CD8-positive, alpha-beta memory T cell (primary cell): ENCODE measurements at regions of chr17 and their contacts with region 1.

Region 1: DNA sequence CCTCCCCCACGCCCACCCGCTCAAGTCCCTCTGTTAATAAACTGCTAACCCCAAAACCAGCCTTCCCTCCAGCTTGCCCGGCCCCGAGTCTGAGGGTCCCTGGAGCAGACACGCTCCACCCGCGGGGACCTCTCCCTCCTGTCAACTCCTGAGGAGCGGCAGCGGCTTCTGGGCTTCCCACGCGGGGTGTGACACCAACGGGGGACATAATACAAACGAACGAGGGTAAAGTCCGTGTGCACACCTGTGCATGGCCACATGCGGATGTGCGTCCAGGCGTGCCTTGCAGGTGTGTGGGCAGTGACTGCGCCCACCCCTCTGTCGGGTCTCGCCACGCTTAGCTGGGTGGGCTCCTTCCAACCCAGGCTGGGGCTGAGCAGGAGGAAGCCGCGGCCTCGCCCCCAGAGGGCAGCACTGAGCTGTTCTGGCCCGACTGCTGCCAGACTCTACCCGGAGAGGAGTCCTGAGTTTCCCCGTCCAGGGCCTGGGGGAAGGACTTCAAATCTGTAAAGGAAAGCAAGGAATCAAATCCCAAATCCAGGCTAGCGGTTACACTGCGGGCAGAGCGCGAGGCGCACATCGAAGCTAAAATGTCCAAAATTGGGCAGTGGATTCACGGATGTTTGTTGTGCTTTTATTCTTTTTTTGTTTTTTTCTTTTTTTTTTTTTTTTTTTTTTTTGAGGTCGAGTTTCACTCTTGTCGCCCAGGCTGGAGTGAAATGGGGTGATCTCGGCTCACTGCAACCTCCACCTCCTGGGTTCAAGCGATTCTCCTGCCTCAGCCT is 24.2 kb upstream of the KRT17 start:
- DNase-seq: peak; percentile 77 to 86 (median 81)
- H3K4me3 ChIP-seq: peak overlapping the region; percentile 75
- H3K4me3 Mint-ChIP-seq: peak overlapping the region; percentile 44 to 83 (median 78)
- H3K27ac ChIP-seq: no peak overlapping the region
- H3K27ac Mint-ChIP-seq: peak overlapping the region in 6 of 8 donors; percentile 20 to 89 (median 70)
- H3K4me1 ChIP-seq: peaks cover 14% of the 10 kb centered on the region
- H3K4me1 Mint-ChIP-seq: peaks cover 9 to 15% (median 11%) of the 10 kb centered on the region in 3 donors
- H3K27me3 ChIP-seq: no peaks in the 10 kb centered on the region
- H3K27me3 Mint-ChIP-seq: peaks cover 0 to 1% of the 10 kb centered on the region in 2 donors

Region 2: DNA sequence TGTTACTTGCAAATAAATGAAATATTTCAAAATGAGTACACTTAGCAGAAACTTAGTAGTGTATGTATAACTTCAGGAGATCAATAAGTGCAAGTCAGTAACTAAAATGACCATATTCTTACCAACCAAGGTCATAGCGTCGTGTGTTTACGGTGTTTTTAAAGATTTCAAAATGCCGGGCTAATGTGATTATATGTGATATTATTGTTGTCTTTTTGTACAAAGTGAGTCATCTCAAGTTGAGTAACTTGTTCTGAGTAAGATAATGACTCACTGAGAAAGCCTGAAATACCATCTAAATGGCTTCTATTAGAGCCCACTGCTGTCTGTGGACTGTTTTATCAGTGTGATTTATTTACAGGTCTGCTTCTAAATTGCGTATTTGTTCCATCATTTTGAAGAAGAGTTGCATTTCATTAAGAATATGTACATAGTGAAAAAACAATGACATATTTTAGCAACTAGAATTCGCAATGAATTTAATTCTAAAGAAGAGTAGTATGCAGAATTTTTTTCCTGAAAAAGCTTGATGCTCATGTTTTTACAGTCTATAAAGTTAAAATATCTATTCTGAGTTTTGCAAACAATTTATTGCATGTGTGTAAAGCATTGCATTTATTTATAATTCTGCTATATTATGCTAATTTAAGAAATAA is 794.3 kb before region 1 on chr17:
- CTCF ChIA-PET with region 1: interaction called, 28 read pairs
- POLR2A ChIA-PET with region 1: no interaction called
- DNase-seq: no peak
- H3K4me3 ChIP-seq: no peak overlapping the region
- H3K4me3 Mint-ChIP-seq: no peak overlapping the region
- H3K27ac ChIP-seq: no peak overlapping the region
- H3K27ac Mint-ChIP-seq: no peak overlapping the region
- H3K4me1 ChIP-seq: no peaks in the 10 kb centered on the region
- H3K4me1 Mint-ChIP-seq: peaks cover 3 to 4% (median 4%) of the 10 kb centered on the region in 3 donors
- H3K27me3 ChIP-seq: no peaks in the 10 kb centered on the region
- H3K27me3 Mint-ChIP-seq: peaks cover 14 to 45% of the 10 kb centered on the region in 2 donors

Region 3: GRCh38 chr17:41588126-41588810 is 60.3 kb before region 1 on chr17:
- CTCF ChIA-PET with region 1: no interaction called
- POLR2A ChIA-PET with region 1: no interaction called
- DNase-seq: no peak
- H3K4me3 ChIP-seq: no peak overlapping the region
- H3K4me3 Mint-ChIP-seq: no peak overlapping the region
- H3K27ac ChIP-seq: no peak overlapping the region
- H3K27ac Mint-ChIP-seq: no peak overlapping the region
- H3K4me1 ChIP-seq: no peaks in the 10 kb centered on the region
- H3K4me1 Mint-ChIP-seq: no peaks in the 10 kb centered on the region
- H3K27me3 ChIP-seq: no peaks in the 10 kb centered on the region
- H3K27me3 Mint-ChIP-seq: peaks cover 21 to 37% of the 10 kb centered on the region in 2 donors

Region 4: GRCh38 chr17:41635121-41636097 is 13.2 kb before region 1 on chr17:
- CTCF ChIA-PET with region 1: interaction called, 19 read pairs
- POLR2A ChIA-PET with region 1: no interaction called
- DNase-seq: no peak
- H3K4me3 ChIP-seq: no peak overlapping the region
- H3K4me3 Mint-ChIP-seq: no peak overlapping the region
- H3K27ac ChIP-seq: no peak overlapping the region
- H3K27ac Mint-ChIP-seq: no peak overlapping the region
- H3K4me1 ChIP-seq: no peaks in the 10 kb centered on the region
- H3K4me1 Mint-ChIP-seq: no peaks in the 10 kb centered on the region
- H3K27me3 ChIP-seq: no peaks in the 10 kb centered on the region
- H3K27me3 Mint-ChIP-seq: no peaks in the 10 kb centered on the region

Region 5: GRCh38 chr17:41665566-41666236 is 17.1 kb after region 1 on chr17:
- CTCF ChIA-PET with region 1: interaction called, 311 read pairs
- POLR2A ChIA-PET with region 1: interaction called, 8 read pairs
- DNase-seq: peak; percentile 86 to 91 (median 88)
- H3K4me3 ChIP-seq: peak overlapping the region; percentile 78
- H3K4me3 Mint-ChIP-seq: peak overlapping the region; percentile 87 to 95 (median 89)
- H3K27ac ChIP-seq: peak overlapping the region; percentile 86
- H3K27ac Mint-ChIP-seq: peak overlapping the region; percentile 91 to 100 (median 99)
- H3K4me1 ChIP-seq: peaks cover 14% of the 10 kb centered on the region
- H3K4me1 Mint-ChIP-seq: peaks cover 19 to 29% (median 26%) of the 10 kb centered on the region in 3 donors
- H3K27me3 ChIP-seq: no peaks in the 10 kb centered on the region
- H3K27me3 Mint-ChIP-seq: no peaks in the 10 kb centered on the region

Region 6: DNA sequence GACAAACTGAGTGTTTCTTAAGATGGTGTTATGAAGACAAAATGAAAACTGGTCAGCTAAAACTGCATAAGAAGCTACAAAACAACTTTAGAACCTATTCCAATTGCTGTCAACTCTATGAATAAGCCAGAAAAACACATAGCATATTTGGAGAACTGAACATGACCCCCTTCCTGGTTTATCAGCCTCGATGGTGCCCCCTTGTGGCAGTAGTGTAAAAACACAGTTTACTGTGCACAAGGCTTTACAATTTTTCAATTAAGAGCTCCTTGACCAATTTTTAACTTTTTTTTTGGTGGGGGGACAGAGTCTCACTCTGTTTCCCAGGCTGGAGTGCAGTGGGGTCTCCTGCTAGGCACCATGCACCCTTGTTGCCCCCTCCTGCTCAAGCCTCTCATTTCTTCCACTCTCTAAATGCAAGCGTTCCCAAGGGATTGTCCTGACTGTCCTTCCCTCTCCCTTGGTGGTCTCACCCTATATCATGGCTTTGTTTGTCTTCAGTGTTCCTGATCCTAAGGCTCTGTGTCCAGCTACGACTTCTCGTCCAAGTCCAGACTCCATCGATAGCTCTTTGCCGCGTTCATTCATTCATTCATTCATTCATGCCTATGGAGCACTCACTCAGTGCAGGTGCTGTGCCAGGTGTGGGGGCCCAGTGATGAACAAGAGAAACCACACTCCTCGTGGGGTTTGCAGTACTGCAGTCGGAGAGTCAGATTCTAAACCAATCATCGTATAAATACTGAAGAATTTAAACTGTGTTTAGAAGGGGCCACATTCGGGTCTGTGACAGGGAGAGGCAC is 47.6 kb after region 1 on chr17:
- CTCF ChIA-PET with region 1: interaction called, 10 read pairs
- POLR2A ChIA-PET with region 1: no interaction called
- DNase-seq: peak; percentile 66 to 84 (median 67)
- H3K4me3 ChIP-seq: no peak overlapping the region
- H3K4me3 Mint-ChIP-seq: peak overlapping the region in 1 of 7 donors; percentile 60
- H3K27ac ChIP-seq: no peak overlapping the region
- H3K27ac Mint-ChIP-seq: peak overlapping the region in 6 of 8 donors; percentile 6 to 83 (median 78)
- H3K4me1 ChIP-seq: peaks cover 10% of the 10 kb centered on the region
- H3K4me1 Mint-ChIP-seq: peaks cover 21 to 35% (median 27%) of the 10 kb centered on the region in 3 donors
- H3K27me3 ChIP-seq: no peaks in the 10 kb centered on the region
- H3K27me3 Mint-ChIP-seq: peaks cover 2 to 3% of the 10 kb centered on the region in 2 donors